ENCODE measurements at regions of chr12 and their contacts with region 1.

Region 1: DNA sequence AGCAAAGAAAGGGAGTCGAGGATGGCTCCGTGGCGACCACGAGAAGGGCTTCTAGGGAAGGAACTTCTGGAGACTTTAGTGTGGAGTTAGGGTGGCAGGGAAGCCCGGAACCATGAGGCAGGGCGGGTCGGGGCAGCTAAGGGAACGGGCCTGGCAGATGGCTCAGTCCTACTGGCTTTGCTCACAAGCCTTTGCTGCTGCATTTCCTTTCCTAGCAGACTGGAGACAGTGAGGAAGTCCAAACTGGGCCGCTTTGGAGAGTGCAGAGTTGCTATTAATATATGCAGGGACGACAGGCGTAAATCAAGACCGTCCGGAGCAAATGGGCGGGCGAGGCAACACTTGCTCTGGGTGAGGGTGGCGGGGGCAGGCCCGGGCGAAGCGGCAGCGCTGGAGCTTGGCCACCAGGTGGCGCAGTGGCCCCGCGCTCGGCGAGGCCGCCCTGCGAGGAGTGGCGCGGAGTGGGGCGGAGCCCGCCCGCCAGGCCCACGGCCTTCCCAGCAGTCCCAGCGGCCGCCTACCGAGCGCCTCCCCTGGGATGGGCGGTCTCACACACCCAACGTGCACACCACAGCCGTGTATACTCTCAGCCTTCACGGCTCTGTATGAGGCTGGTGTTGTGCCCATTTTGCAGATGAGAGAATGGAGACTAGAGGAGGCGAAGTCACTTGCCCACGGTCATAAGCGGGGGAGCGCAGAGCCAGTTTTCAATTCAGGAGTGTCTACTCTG is 24.4 kb upstream of the LRTM2 start:
- DNase-seq: peak; percentile 95
- H3K4me3 ChIP-seq: peak overlapping the region; percentile 71
- H3K27ac ChIP-seq: no peak overlapping the region
- H3K4me1 ChIP-seq: no peaks in the 10 kb centered on the region
- H3K27me3 ChIP-seq: no peaks in the 10 kb centered on the region

Region 2: DNA sequence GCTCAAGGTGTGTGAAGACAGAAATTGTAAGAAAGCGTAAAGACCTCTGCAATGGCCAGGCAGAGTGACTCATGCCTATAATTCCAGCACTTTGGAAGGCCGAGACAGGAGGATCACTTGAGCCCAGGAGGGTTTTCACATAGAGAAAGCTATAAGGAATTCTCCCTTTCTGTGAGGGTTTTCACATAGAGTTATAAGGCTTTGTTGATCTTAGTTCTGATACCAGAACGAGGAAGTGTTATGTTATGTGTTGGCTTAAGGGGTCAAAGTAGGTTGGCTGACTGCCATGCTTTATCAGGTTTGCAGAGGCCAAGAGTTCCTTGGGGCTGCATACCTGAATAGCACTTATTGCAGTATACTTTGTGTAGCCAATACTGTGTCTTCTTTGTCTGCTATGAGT is 665.8 kb before region 1 on chr12:
- in situ Hi-C with region 1: loop called (anchors 25 kb)
- DNase-seq: no peak
- H3K4me3 ChIP-seq: no peak overlapping the region
- H3K27ac ChIP-seq: no peak overlapping the region
- H3K4me1 ChIP-seq: no peaks in the 10 kb centered on the region
- H3K27me3 ChIP-seq: no peaks in the 10 kb centered on the region

Region 3: DNA sequence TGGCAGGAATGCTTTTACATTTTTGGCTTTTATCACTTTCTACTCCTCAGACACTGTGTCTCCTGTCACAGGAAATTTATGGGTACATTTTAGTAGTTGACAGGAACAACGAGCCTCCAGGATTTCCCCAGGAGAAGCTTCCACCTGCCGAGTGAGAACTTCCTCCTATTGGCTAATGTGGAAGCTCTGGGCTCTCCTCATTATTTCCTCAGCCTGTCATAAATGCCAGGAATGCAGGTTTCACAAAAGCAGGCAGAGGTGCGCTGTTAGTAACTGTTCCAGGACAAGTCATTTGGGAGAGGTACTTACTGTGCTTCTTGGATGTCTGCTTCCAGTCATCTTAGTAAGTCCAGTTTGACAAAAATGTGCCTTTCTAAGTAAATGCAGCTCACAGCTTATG is 227.4 kb after region 1 on chr12:
- in situ Hi-C with region 1: loop called (anchors 10 kb)
- DNase-seq: no peak
- H3K4me3 ChIP-seq: no peak overlapping the region
- H3K27ac ChIP-seq: no peak overlapping the region
- H3K4me1 ChIP-seq: no peaks in the 10 kb centered on the region
- H3K27me3 ChIP-seq: peaks cover 25% of the 10 kb centered on the region